HepG2 (cell line): ENCODE measurements at regions of chr6 and their contacts with region 1.

Region 1: DNA sequence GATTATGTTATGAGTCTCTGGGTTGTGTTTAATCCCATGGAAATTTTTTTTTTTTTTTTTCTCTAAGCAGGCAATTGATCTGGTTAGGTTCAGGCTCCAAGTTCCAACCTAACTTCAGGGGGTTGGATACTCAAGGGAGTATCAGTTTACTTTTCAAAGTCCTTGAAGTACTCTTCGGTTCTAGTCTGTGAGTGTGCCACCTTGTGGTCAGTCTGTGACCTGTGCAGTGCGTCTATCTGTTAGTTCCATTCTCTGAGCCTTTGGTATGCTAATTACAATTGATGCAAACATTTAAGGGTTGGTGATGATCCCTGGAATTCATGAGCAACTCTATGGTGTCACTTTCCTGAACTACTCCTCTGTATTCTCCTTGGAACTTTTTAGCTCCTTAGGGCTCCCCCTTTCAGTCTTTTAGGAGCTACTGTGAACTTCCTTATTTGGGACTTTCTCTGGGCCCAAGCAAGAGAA is 342.0 kb downstream of the SOX4 start:
- DNase-seq: peak; percentile 36
- ATAC-seq: peak; percentile 87
- H3K4me3 ChIP-seq: no peak overlapping the region
- H3K27ac ChIP-seq: no peak overlapping the region
- H3K4me1 ChIP-seq: no peaks in the 10 kb centered on the region
- H3K27me3 ChIP-seq: no peaks in the 10 kb centered on the region
- CTCF ChIP-seq: peak; percentile 58
- EP300 ChIP-seq: no peak
- POLR2A ChIP-seq: no peak
- RAD21 ChIP-seq: no peak

Region 2: DNA sequence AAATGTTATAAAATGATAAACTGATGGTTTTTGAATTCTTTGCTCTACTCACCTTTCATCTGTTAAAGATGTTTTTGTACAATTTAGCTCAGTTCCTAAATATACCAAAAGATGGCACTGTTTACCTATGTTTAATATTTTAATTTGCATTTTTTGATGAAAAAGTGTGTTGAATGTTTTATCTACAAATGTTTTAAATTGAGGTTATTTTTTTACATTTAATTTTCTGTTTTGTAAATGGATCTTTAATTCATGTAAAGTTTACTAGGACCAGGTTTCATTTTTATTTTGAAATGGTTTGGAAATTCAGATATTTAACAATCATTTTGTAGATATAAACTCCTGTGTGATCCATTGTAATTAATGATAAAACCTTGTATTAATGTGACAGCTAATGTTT is 1371.3 kb before region 1 on chr6:
- CTCF ChIA-PET with region 1: interaction called, 7 read pairs
- POLR2A ChIA-PET with region 1: no interaction called
- in situ Hi-C with region 1: loop called (anchors 10 kb)
- intact Hi-C with region 1: no loop called
- DNase-seq: no peak
- ATAC-seq: no peak
- H3K4me3 ChIP-seq: no peak overlapping the region
- H3K27ac ChIP-seq: no peak overlapping the region
- H3K4me1 ChIP-seq: peaks cover 3% of the 10 kb centered on the region
- H3K27me3 ChIP-seq: no peaks in the 10 kb centered on the region
- CTCF ChIP-seq: peak; percentile 35
- EP300 ChIP-seq: no peak
- POLR2A ChIP-seq: no peak
- RAD21 ChIP-seq: no peak

Region 3: DNA sequence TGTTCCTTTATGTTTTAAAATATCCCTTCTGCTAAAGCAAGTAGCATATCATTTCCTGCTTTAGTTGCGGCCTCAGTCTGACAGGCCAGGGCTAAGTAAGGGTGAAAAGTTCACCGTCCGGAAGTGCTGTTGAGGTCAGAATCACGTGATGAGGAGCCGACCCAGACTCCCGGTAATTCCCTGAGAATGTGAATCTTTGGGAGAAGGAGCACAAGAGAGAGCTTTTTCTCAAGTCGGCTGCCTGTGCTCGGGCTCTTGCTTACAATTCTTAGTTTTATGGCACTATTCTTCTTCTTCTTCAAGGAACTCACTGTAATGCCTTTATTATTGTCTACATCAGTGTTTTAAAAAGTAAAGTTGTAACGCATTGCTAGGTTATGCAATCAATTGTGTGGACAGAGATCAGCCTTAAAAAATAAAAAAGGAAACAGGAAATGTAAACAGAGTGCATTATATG is 51.9 kb after region 1 on chr6:
- CTCF ChIA-PET with region 1: no interaction called
- POLR2A ChIA-PET with region 1: no interaction called
- in situ Hi-C with region 1: no loop called
- intact Hi-C with region 1: no loop called
- DNase-seq: peak; percentile 5
- ATAC-seq: no peak
- H3K4me3 ChIP-seq: no peak overlapping the region
- H3K27ac ChIP-seq: no peak overlapping the region
- H3K4me1 ChIP-seq: no peaks in the 10 kb centered on the region
- H3K27me3 ChIP-seq: no peaks in the 10 kb centered on the region
- CTCF ChIP-seq: no peak
- EP300 ChIP-seq: no peak
- POLR2A ChIP-seq: no peak
- RAD21 ChIP-seq: no peak

Region 4: DNA sequence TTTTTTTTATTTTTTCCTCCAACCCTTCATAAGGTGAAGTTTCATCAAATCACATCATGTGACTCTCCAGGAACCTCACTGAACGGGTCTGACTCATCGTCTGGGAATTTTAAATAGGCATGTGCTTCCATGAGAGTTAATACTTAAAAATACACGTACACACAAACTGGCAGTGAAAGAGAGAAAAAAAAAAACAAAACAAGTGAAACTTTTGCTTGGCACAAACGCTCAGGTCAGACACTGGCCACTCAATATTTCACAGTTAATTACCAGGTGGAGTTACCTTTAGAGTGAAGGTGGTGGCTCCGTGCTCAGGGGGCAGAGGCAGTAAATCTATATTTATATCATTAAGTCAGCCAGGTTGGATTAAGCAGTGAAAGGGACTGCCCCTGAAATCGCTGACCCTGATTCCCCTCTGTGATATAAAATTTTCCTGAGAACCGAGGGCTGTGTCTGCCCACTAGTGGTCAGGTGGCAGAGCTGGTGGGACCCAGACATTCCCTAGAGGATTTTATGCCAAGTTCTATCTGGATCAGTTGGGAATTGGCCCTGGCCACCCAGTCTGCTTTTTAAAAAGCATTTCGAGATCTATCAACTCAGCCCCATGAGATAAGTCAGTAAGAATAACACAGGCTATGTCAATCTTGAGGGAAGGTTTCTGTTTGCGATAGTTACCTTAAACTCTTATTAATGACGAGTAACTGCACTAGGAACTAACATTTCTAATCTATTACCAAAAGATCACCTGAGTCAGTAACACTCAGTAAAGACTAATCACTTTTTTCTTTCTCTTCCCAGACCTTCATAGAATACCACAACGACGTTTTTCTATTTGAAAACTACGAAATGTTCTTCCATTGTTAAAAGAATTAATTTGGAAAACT is 892.8 kb after region 1 on chr6:
- CTCF ChIA-PET with region 1: no interaction called
- POLR2A ChIA-PET with region 1: no interaction called
- in situ Hi-C with region 1: no loop called
- intact Hi-C with region 1: loop called (anchors 5 kb)
- DNase-seq: peak; percentile 39
- ATAC-seq: peak; percentile 72
- H3K4me3 ChIP-seq: no peak overlapping the region
- H3K27ac ChIP-seq: no peak overlapping the region
- H3K4me1 ChIP-seq: no peaks in the 10 kb centered on the region
- H3K27me3 ChIP-seq: no peaks in the 10 kb centered on the region
- CTCF ChIP-seq: peak; percentile 50
- EP300 ChIP-seq: no peak
- POLR2A ChIP-seq: no peak
- RAD21 ChIP-seq: no peak